ENCODE measurements at regions of chr12 and their contacts with region 1.

Region 1: DNA sequence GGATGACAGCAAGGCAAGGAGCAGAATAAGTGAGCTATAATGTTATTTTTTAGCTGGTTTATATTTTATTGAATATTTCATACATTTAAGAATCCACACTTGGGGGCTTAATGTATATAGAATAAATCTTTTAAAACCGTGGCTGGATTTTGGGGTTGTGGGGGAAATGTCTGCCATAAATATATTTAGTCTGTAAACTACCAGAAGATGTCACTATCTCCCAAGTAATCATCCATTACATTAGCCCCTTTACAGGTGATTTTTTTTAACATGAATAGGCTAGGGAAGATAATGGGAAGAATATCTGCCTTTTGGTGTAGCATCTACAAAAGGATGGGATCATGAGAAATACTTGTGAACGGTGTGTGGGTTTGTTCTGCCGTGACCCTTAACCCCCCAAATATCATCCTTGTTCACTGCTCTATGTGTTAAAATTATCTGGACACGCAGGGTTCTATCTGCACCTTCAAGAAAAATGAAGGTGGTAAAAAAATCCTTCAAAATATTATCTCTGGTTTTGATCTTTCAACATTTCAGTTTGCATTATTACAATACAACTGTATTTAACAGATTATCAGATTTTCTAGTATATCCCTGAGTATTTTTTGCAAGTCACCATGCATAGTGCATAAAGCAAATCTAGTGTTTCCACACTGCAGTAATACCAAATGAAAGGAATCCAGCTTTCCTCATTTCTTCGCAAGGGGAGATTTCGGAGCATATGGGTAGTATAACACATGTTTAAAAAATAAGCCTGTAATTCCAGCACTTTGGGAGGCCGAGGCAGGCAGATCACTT is 8.0 kb upstream of the SLC17A8 start:
- DNase-seq: peak; percentile 5
- ATAC-seq: peak; percentile 73; the same call in 1 of the 2 replicates
- H3K4me3 ChIP-seq: no peak overlapping the region
- H3K27ac ChIP-seq: no peak overlapping the region
- H3K4me1 ChIP-seq: no peaks in the 10 kb centered on the region
- H3K27me3 ChIP-seq: peaks cover 5% of the 10 kb centered on the region
- CTCF ChIP-seq: peak; percentile 53; the same call in 1 of the 2 replicates

Region 2: DNA sequence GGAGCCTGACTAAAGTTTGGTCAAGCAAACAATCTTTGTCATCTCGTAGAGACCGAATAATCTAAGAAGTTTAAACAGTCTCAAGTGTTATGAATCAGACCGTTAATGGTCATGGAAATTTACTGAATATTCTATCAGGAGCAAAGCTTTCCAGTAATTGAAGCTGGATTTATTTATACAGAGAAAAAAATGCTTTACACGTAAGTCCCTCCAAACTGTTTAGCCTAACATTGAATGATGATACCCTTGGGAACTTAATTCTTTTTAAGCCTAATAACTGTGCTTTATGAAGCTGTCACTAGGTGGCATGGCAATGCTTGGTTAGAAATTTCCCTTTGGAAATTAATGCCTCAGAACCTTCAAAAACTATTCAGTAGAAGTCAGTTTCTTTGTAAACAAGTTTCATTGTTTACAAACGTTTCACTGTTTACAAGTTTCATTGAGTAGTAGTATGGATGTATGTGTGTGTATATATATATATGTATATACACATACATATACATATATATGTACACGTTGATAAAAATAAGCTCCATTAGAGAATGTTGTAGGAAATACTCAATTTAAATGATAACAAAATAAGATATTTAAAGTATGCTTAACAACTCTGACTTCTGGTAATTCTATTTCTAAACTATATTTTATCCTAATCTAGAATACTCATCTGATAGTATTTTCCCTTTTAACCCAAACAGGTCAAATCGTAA is 114.1 kb before region 1 on chr12:
- CTCF ChIA-PET with region 1: no interaction called
- POLR2A ChIA-PET with region 1: no interaction called
- in situ Hi-C with region 1: no loop called
- intact Hi-C with region 1: loop called (anchors 10 kb)
- DNase-seq: peak; percentile 17
- ATAC-seq: peak; percentile 83
- H3K4me3 ChIP-seq: no peak overlapping the region
- H3K27ac ChIP-seq: no peak overlapping the region
- H3K4me1 ChIP-seq: peaks cover 9% of the 10 kb centered on the region
- H3K27me3 ChIP-seq: no peaks in the 10 kb centered on the region
- CTCF ChIP-seq: peak; percentile 78; the same call in 1 of the 2 replicates

Region 3: DNA sequence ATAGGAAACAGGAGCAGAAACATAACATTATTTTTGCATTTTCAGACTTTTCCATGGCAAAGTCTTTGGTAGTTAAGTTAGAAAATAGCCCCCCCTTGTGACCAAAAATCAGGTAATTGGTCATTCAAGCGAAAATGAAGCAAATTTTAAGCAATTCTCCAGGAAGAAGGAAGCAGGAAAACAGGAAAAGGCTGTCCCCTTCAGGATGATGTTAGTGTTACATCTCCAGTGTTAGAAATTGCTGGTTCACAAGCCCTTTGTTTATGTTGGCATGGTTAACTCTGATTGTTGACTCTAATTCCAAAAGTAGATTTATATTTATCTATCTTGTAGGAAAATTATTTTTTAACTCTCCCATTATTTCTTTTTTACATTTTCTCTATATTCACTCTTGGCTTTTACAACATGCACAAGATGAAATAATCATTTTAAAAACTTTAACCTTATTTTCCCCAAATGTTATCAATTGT is 205.8 kb after region 1 on chr12:
- CTCF ChIA-PET with region 1: no interaction called
- POLR2A ChIA-PET with region 1: no interaction called
- in situ Hi-C with region 1: no loop called
- intact Hi-C with region 1: loop called (anchors 1 kb)
- DNase-seq: peak; percentile 58
- ATAC-seq: peak; percentile 80
- H3K4me3 ChIP-seq: no peak overlapping the region
- H3K27ac ChIP-seq: no peak overlapping the region
- H3K4me1 ChIP-seq: no peaks in the 10 kb centered on the region
- H3K27me3 ChIP-seq: no peaks in the 10 kb centered on the region
- CTCF ChIP-seq: peak; percentile 85; the same call in 1 of the 2 replicates

Region 4: GRCh38 chr12:100668945-100669536 is 320.2 kb after region 1 on chr12:
- CTCF ChIA-PET with region 1: no interaction called
- POLR2A ChIA-PET with region 1: no interaction called
- in situ Hi-C with region 1: no loop called
- intact Hi-C with region 1: loop called (anchors 5 kb)
- DNase-seq: peak; percentile 36
- ATAC-seq: peak; percentile 96
- H3K4me3 ChIP-seq: no peak overlapping the region
- H3K27ac ChIP-seq: no peak overlapping the region
- H3K4me1 ChIP-seq: no peaks in the 10 kb centered on the region
- H3K27me3 ChIP-seq: no peaks in the 10 kb centered on the region; the same call in 1 of the 2 replicates
- CTCF ChIP-seq: peak; percentile 96

Region 5: GRCh38 chr12:100733817-100734593 is 385.1 kb after region 1 on chr12:
- CTCF ChIA-PET with region 1: no interaction called
- POLR2A ChIA-PET with region 1: no interaction called
- in situ Hi-C with region 1: no loop called
- intact Hi-C with region 1: loop called (anchors 2 kb)
- DNase-seq: no peak
- ATAC-seq: peak; percentile 66; the same call in 1 of the 2 replicates
- H3K4me3 ChIP-seq: no peak overlapping the region
- H3K27ac ChIP-seq: no peak overlapping the region
- H3K4me1 ChIP-seq: no peaks in the 10 kb centered on the region
- H3K27me3 ChIP-seq: peaks cover 6% of the 10 kb centered on the region; the same call in 1 of the 2 replicates
- CTCF ChIP-seq: peak; percentile 75

Measured in Panc1 (cell line).